Transverse colon (tissue), 4 donors: ENCODE measurements at regions of chr1 and their contacts with region 1.

Region 1: GRCh38 chr1:212070720-212071302 is 35.3 kb downstream of the DTL start:
- DNase-seq: no peak
- H3K4me3 ChIP-seq: no peak overlapping the region
- H3K27ac ChIP-seq: no peak overlapping the region
- H3K4me1 ChIP-seq: peaks cover 0 to 5% (median 0%) of the 10 kb centered on the region in 4 donors
- H3K27me3 ChIP-seq: no peaks in the 10 kb centered on the region
- CTCF ChIP-seq: peak; percentile 68 to 76 (median 73)
- EP300 ChIP-seq: no peak
- POLR2A ChIP-seq: no peak

Region 2: GRCh38 chr1:212291505-212292134 is 220.8 kb after region 1 on chr1:
- in situ Hi-C with region 1: loop called in 1 of 4 experiments (anchors 10 kb)
- intact Hi-C with region 1: no loop called
- DNase-seq: no peak
- H3K4me3 ChIP-seq: no peak overlapping the region
- H3K27ac ChIP-seq: no peak overlapping the region
- H3K4me1 ChIP-seq: peaks cover 30 to 76% (median 62%) of the 10 kb centered on the region in 4 donors
- H3K27me3 ChIP-seq: no peaks in the 10 kb centered on the region
- CTCF ChIP-seq: peak; percentile 36 to 53 (median 48)
- EP300 ChIP-seq: no peak
- POLR2A ChIP-seq: no peak

Region 3: GRCh38 chr1:212368073-212368484 is 297.3 kb after region 1 on chr1:
- in situ Hi-C with region 1: loop called (anchors 5 to 25 kb)
- intact Hi-C with region 1: loop called (anchors 5 kb)
- DNase-seq: peak; percentile 50
- H3K4me3 ChIP-seq: no peak overlapping the region
- H3K27ac ChIP-seq: no peak overlapping the region
- H3K4me1 ChIP-seq: no peaks in the 10 kb centered on the region
- H3K27me3 ChIP-seq: no peaks in the 10 kb centered on the region
- CTCF ChIP-seq: peak; percentile 76 to 81 (median 79)
- EP300 ChIP-seq: no peak
- POLR2A ChIP-seq: no peak